Activated CD4-positive, alpha-beta T cell treated with anti-CD3 and anti-CD28 coated beads, Interleukin-2, amount 10 ng/mL, durations not matched to agents 24 days and 14 days (primary cell): ENCODE measurements at regions of chr10 and their contacts with region 1.

Region 1: DNA sequence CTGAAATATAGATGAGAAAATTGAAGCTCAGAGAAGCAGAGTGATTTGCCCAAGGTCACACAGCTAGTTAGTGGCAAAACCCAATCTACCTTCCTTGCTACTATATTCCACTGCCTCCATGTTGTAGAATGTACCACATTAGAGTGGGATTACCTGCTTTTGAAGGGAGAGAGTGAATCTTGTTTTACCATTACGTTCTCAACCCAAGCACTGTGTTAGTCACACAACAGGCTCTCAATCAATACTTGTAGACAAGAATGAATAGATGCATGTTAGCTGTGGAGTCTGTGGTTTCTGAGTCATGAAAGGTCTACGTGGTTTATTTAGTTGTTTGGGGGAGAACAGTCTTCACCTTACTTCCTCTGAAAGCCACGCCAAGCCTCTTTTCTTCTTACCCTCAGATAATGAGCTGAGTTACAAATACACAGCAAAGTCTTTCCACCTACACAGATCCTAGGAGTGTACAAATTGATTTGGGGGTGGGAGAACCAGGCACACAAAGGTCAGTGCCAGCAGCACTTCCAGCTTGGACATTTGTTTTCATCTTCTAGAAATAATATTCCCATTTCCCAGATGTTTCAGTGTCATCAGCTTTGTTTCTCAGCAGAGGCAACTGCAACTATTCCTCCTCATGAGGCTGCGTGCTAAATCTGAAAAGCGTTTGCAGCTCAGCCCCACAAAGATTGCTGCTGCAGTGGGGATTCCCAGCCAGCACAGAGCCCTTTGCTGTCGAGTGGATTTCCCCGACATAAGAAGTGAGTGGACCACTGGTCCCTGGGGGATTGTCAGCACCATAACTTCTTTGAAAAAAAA is 71.5 kb upstream of the ADO start:
- DNase-seq: peak; percentile 91
- H3K4me3 Mint-ChIP-seq: no peak overlapping the region
- H3K27ac Mint-ChIP-seq: no peak overlapping the region
- H3K4me1 Mint-ChIP-seq: peaks cover 43% of the 10 kb centered on the region
- H3K27me3 Mint-ChIP-seq: peaks cover 1% of the 10 kb centered on the region

Region 2: DNA sequence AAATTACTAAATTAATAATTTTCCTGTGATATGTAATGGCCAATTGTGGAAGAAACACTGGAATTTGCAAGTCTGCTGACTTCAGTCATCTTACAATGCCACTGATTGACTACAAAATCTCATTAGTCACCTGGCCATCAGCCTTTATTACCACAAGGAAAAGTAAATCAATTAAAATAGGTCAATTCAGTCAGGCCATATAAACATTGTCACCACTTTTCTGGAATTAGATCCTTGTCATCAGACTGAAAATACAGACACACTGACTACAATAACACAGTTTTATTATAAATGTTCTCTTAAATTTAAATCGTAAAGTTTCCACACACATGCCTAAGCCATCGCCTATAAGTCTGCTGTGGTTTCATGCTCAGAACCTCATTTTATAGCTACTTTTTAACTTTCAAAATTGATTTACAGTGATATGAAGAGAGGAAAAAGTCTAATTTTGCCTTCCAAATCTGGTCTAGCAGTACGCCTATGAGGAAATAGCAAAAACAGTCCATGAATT is 518.6 kb before region 1 on chr10:
- intact Hi-C with region 1: no loop called
- DNase-seq: no peak
- H3K4me3 Mint-ChIP-seq: no peak overlapping the region
- H3K27ac Mint-ChIP-seq: no peak overlapping the region
- H3K4me1 Mint-ChIP-seq: peaks cover 2% of the 10 kb centered on the region
- H3K27me3 Mint-ChIP-seq: no peaks in the 10 kb centered on the region

Region 3: DNA sequence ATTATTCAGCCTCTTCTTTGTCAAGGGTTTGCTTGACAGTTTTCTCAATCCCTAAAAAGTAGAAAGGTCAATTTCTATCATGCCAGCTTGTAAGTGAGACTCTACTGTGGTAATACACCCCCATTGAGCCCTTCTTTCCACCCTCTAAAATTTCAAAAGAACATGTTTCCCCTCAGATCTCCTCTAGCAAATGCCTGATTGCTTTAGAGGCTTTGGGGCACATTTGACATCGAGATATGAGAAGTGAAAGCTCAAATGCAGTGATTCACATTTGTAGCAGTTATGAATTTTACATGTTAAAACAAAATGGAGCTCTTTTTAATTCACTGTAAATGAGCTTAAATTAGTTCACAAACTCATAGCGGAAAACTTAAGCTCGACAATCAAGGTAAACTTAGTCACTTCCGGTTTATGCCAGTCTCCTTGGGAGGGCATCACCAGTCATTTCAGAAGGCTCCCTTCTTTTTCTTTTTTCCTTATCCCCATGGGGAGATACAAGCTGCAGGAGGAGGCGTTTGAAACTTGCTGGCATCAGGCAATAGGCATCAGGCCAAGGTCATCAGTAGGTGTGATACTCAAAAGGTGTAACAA is 16.1 kb after region 1 on chr10:
- intact Hi-C with region 1: loop called (anchors 1 kb)
- DNase-seq: no peak
- H3K4me3 Mint-ChIP-seq: no peak overlapping the region
- H3K27ac Mint-ChIP-seq: peak overlapping the region; percentile 74
- H3K4me1 Mint-ChIP-seq: peaks cover 26% of the 10 kb centered on the region
- H3K27me3 Mint-ChIP-seq: peaks cover 8% of the 10 kb centered on the region

Region 4: DNA sequence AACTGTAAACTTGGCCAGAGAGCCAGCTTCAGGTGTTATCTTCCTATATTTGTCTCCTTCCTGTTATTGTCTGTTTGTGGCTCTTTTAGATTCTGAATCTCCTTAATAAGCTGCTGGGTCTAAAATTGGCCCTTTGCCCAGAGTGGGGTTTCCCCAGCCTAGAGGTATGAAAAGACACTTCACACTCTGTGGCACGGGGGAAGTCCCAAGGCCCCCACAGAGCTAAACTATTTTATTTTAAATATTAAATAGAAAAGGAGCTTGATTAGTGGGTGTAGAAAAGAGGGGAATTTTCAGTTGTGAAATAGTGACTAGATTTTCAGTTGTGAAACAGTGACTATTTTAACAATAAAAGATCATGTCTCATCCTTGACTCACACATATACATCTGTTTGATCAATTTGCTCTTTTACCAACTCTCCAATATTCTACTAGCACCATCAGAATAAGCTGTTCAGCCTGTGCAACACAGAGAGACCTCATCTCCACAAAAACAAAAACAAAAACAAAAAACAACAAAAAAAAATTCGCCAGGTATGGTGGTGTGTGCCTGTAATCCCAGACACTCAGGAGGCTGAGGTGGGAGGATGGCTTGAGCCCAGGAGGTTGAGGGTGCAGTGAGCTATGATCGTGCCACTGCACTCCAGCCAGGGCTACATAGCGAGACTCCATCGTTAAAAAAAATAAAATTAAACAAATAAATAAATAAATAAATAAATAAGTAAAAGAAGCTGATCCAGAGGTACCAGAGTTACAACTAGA is 46.6 kb after region 1 on chr10:
- intact Hi-C with region 1: loop called (anchors 1 kb)
- DNase-seq: peak; percentile 84
- H3K4me3 Mint-ChIP-seq: peak overlapping the region; percentile 42
- H3K27ac Mint-ChIP-seq: peak overlapping the region; percentile 68
- H3K4me1 Mint-ChIP-seq: peaks cover 31% of the 10 kb centered on the region
- H3K27me3 Mint-ChIP-seq: peaks cover 12% of the 10 kb centered on the region

Region 5: GRCh38 chr10:63068246-63068645 is 335.2 kb after region 1 on chr10:
- intact Hi-C with region 1: loop called (anchors 5 kb)
- DNase-seq: peak; percentile 70
- H3K4me3 Mint-ChIP-seq: peak overlapping the region; percentile 49
- H3K27ac Mint-ChIP-seq: peak overlapping the region; percentile 34
- H3K4me1 Mint-ChIP-seq: peaks cover 38% of the 10 kb centered on the region
- H3K27me3 Mint-ChIP-seq: peaks cover 15% of the 10 kb centered on the region